ENCODE measurements at regions of chr6 and their contacts with region 1.

Region 1: GRCh38 chr6:3023663-3024483 is 24.2 kb downstream of the NQO2 start:
- DNase-seq: peak; percentile 94 to 98 (median 96)
- ATAC-seq: peak; percentile 93 to 99 (median 98)
- H3K4me3 ChIP-seq: peak overlapping the region; percentile 28 to 69 (median 54)
- H3K27ac ChIP-seq: peak overlapping the region; percentile 78 to 97 (median 91)
- H3K4me1 ChIP-seq: peaks cover 0 to 62% (median 20%) of the 10 kb centered on the region in 12 donors
- H3K27me3 ChIP-seq: no peaks in the 10 kb centered on the region
- CTCF ChIP-seq: no peak
- POLR2A ChIP-seq: peak in 1 of 2 donors; percentile 75

Region 2: GRCh38 chr6:2999618-3000557 is 24.0 kb before region 1 on chr6 and contains the start of gene NQO2:
- intact Hi-C with region 1: loop called in 2 of 10 experiments (anchors 1 kb)
- DNase-seq: peak; percentile 94 to 97 (median 96)
- ATAC-seq: peak; percentile 87 to 97 (median 94)
- H3K4me3 ChIP-seq: peak within 1 kb of the TSS; percentile 67 to 95 (median 86)
- H3K27ac ChIP-seq: peak within 1 kb of the TSS; percentile 66 to 95 (median 90)
- H3K4me1 ChIP-seq: peaks cover 0 to 41% (median 23%) of the 10 kb centered on the region in 12 donors
- H3K27me3 ChIP-seq: no peaks in the 10 kb centered on the region
- CTCF ChIP-seq: peak in 2 of 12 donors; percentile 1 to 13
- POLR2A ChIP-seq: peak; percentile 89 to 95
- total RNA-seq, gene NQO2: 37.0 to 76.0 (median 62.8) TPM

Region 3: DNA sequence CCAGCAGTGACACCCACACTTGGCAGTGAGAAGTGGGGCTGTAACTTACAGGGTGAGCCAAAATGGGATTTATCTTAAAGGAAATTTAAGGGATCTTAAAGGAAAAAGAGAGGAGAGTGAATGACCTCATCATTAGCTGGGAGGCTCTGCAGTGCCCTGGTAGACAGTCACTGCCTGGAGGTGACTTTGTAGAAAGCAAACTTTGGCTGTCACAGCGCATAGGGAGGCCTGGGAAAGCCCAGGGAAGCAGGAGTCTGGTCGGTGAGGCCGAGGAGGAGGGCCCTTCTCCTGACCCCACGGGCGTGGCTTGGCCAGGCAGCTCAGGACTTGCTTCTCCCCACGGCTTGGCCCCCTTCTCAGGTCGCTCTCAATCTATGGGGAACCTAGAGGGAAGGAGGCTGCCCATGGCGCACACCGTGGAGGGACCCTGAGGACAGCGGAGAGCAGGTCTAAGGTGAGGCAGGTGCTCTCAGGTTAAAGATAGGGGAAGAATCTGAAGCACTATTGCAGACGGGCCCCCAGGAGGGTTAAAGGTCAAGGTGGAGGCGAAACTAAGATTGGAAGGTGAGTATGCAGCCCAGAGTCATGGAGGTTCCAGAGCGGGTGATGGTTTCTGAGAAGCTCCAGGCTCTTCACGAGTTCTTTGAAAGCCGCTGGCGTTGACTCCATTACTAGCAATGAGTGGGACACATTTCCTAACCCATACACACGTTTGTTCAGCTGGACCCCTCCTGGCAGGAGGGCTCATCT is 28.8 kb after region 1 on chr6:
- intact Hi-C with region 1: loop called in 3 of 10 experiments (anchors 2 kb)
- DNase-seq: no peak
- ATAC-seq: no peak
- H3K4me3 ChIP-seq: peak overlapping the region in 1 of 12 donors; percentile 59
- H3K27ac ChIP-seq: peak overlapping the region in 1 of 12 donors; percentile 69
- H3K4me1 ChIP-seq: peaks cover 0 to 31% (median 16%) of the 10 kb centered on the region in 12 donors
- H3K27me3 ChIP-seq: no peaks in the 10 kb centered on the region
- CTCF ChIP-seq: no peak
- POLR2A ChIP-seq: no peak